CD4-positive, alpha-beta memory T cell (primary cell): ENCODE measurements at regions of chr14 and their contacts with region 1.

Region 1: DNA sequence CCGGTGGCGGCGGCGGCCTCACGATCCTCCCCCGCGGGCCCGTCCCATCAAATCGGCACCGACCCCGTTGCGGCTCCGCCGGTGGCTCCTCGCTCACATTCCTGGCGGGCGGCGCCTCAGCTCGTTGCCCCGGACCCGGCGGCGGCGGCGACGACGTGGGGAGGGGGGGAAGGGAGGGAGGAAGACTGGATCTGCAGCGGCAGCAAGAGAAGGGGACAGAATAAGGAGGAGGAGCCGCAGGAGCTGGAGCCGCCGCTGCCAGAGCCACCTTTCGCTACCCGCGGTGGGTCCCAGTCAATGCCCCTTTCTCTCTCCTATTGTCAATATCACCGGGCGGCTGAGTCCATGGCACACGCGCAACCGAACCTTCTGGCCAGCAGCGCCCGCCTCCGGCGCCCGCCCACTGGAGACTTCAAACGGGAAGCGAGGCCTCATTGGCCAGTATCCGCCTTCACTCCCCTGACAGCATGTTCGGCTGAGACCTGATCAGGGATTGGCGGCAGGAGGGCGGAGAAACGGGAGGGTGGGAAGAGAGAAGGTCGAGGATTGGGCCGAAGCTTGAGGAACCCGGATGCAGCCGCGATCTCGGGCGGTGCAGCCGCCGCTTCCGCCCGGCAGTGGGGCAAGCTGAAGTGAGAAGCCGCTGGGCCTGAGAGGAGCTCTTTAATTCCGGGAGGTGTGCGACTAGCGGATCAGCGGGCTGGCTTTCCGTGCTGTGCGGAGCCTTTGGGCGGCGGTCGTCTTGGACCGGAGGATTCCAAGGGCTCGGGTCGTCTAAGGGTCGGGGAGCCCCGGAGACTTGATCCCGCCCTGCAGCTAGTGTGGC is at the start of gene PPP2R5E:
- DNase-seq: peak; percentile 97 to 99 (median 98)
- H3K4me3 ChIP-seq: peak within 1 kb of the TSS; percentile 68 to 83
- H3K4me3 Mint-ChIP-seq: peak within 1 kb of the TSS; percentile 97 to 99 (median 98)
- H3K27ac ChIP-seq: peak within 1 kb of the TSS; percentile 91
- H3K27ac Mint-ChIP-seq: peak within 1 kb of the TSS; percentile 92 to 98 (median 97)
- H3K4me1 ChIP-seq: peaks cover 26% of the 10 kb centered on the region
- H3K4me1 Mint-ChIP-seq: peaks cover 26 to 48% (median 33%) of the 10 kb centered on the region in 4 donors
- H3K27me3 ChIP-seq: no peaks in the 10 kb centered on the region
- H3K27me3 Mint-ChIP-seq: peaks cover 0 to 1% of the 10 kb centered on the region in 2 donors
- total RNA-seq, gene PPP2R5E: 36.2 to 38.0 TPM

Region 2: DNA sequence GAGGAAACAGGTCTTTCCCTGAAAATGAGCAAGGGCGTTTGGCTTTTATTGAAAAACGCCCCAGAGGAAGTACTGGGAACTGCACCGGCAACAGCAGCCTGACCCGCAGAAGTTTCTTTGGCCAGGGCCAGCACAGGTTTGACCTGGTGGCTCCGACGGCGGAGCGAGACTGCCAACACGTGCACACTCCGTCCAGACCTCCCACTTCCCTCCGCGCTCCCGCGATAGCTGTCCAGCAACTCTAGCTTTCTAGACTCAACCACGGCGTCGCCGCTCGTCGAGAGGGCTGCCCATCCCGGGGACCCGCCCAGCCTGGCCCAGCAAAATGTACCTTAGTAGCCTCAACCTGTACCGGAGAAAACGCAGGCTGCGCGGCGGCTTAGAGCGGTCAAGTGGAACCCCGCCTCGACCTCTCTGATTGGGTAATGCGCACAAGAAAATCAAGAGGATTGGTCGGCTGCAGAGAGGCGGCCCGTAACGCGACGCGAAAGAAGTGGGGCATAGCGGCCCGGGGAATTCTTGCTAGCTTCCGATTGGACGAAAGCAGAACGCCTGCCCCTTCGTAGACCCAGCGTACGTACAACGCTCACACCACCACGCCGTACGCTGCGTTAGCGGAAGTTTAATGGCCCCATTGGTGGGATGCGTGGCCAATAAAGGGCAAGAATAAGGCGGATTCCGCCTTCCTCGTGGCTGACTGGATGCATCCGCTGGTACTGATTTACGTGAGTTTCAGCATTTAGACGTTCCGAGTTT is 98.4 kb after region 1 on chr14 and contains the start of gene WDR89:
- CTCF ChIA-PET with region 1: no interaction called
- POLR2A ChIA-PET with region 1: interaction called, 34 read pairs
- intact Hi-C with region 1: loop called (anchors 1 kb)
- DNase-seq: peak; percentile 96 to 99 (median 98)
- H3K4me3 ChIP-seq: peak within 1 kb of the TSS; percentile 85 to 96
- H3K4me3 Mint-ChIP-seq: peak within 1 kb of the TSS; percentile 85 to 98 (median 92)
- H3K27ac ChIP-seq: peak within 1 kb of the TSS; percentile 99
- H3K27ac Mint-ChIP-seq: peak within 1 kb of the TSS; percentile 90 to 99 (median 97)
- H3K4me1 ChIP-seq: peaks cover 37% of the 10 kb centered on the region
- H3K4me1 Mint-ChIP-seq: peaks cover 22 to 49% (median 33%) of the 10 kb centered on the region in 4 donors
- H3K27me3 ChIP-seq: no peaks in the 10 kb centered on the region
- H3K27me3 Mint-ChIP-seq: no peaks in the 10 kb centered on the region
- total RNA-seq, gene WDR89: 32.8 to 36.3 TPM

Region 3: DNA sequence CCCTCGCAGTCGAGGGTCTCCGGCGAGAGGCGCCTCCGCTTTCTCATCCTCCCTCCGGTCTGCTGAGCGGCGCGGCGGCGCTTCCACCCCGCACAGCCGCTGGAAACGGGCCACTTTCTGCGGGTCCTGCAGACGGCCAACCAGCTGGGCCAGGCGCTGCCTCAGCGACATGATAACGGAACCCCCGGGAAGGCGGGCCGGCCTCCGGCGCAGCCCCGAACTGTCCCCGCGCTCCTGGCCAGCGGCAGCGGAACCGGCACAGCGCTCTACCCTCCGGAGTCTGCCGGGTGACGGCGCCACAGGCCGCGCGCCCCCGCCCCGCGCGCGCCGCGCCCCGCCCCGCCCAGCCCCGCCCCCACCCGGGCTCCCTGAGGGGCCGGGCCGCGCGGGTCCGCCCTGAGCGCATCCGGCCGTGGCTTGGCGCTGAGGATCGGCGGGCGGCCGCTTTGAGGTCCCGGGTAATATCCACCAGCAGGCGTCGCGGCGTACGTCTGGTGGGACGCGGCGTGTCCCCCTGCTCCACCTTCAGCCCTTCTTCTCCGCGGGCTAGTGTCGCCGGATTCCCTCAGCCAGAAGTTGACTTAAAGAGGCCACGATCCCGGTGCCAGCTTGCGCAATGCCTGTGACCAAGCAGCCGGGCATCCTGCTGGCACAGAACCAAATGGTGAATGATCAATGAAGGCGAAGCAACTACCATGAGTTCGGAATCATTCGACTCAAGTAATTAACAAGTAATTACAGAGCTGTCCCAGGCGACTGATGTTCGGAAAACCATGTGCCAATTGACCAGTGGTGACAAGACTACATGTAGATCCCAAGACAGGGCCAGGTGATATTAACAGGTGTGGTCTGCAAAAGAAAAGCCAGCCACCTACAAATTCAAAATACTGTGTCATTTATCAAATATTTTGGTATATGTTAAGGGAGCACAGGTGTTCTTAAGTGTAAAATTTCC is 184.8 kb after region 1 on chr14 and contains the start of gene SGPP1:
- CTCF ChIA-PET with region 1: interaction called, 3 read pairs
- POLR2A ChIA-PET with region 1: interaction called, 11 read pairs
- intact Hi-C with region 1: loop called (anchors 1 kb)
- DNase-seq: peak; percentile 81 to 86 (median 83)
- H3K4me3 ChIP-seq: peak within 1 kb of the TSS; percentile 57 to 80
- H3K4me3 Mint-ChIP-seq: peak within 1 kb of the TSS; percentile 98 to 100 (median 99)
- H3K27ac ChIP-seq: peak within 1 kb of the TSS; percentile 68
- H3K27ac Mint-ChIP-seq: peak within 1 kb of the TSS; percentile 86 to 98 (median 97)
- H3K4me1 ChIP-seq: peaks cover 31% of the 10 kb centered on the region
- H3K4me1 Mint-ChIP-seq: peaks cover 25 to 53% (median 43%) of the 10 kb centered on the region in 4 donors
- H3K27me3 ChIP-seq: no peaks in the 10 kb centered on the region
- H3K27me3 Mint-ChIP-seq: no peaks in the 10 kb centered on the region
- total RNA-seq, gene SGPP1: 12.2 to 12.4 TPM

Region 4: DNA sequence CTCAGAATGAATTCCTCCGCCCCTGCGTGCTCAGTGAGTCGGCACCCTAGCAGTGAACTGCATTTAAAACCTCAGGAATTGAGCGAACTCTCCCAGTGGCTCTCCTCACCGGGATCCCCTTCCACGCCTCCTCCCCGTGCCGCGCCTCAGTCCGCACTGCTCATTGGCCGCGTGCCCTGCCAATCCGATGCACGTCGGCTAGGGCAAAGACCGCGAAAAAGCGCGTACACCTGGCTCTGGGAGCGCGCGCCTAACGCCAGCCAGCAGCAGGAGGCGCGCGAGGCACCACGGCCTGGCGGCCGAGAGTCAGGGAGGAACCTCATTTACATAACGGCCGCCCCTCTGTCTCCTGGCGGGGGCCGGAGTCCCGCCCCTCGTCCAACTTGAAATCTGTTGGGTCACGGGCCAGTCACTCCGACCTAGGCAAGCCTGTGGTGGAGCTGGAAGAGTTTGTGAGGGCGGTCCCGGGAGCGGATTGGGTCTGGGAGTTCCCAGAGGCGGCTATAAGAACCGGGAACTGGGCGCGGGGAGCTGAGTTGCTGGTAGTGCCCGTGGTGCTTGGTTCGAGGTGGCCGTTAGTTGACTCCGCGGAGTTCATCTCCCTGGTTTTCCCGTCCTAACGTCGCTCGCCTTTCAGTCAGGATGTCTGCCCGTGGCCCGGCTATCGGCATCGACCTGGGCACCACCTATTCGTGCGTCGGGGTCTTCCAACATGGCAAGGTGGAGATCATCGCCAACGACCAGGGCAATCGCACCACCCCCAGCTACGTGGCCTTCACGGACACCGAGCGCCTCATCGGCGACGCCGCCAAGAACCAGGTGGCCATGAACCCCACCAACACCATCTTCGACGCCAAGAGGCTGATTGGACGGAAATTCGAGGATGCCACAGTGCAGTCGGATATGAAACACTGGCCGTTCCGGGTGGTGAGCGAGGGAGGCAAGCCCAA is 997.3 kb after region 1 on chr14 and contains the start of gene HSPA2:
- CTCF ChIA-PET with region 1: no interaction called
- POLR2A ChIA-PET with region 1: no interaction called
- intact Hi-C with region 1: loop called (anchors 2 kb)
- DNase-seq: peak; percentile 92 to 94 (median 94)
- H3K4me3 ChIP-seq: peak within 1 kb of the TSS; percentile 65 to 86
- H3K4me3 Mint-ChIP-seq: peak within 1 kb of the TSS; percentile 92 to 99 (median 96)
- H3K27ac ChIP-seq: peak within 1 kb of the TSS; percentile 43
- H3K27ac Mint-ChIP-seq: peak within 1 kb of the TSS; percentile 86 to 98 (median 90)
- H3K4me1 ChIP-seq: peaks cover 24% of the 10 kb centered on the region
- H3K4me1 Mint-ChIP-seq: peaks cover 12 to 39% (median 29%) of the 10 kb centered on the region in 4 donors
- H3K27me3 ChIP-seq: no peaks in the 10 kb centered on the region
- H3K27me3 Mint-ChIP-seq: peaks cover 0 to 3% of the 10 kb centered on the region in 2 donors
- total RNA-seq, gene HSPA2: 1.3 to 1.5 TPM

Region 5: DNA sequence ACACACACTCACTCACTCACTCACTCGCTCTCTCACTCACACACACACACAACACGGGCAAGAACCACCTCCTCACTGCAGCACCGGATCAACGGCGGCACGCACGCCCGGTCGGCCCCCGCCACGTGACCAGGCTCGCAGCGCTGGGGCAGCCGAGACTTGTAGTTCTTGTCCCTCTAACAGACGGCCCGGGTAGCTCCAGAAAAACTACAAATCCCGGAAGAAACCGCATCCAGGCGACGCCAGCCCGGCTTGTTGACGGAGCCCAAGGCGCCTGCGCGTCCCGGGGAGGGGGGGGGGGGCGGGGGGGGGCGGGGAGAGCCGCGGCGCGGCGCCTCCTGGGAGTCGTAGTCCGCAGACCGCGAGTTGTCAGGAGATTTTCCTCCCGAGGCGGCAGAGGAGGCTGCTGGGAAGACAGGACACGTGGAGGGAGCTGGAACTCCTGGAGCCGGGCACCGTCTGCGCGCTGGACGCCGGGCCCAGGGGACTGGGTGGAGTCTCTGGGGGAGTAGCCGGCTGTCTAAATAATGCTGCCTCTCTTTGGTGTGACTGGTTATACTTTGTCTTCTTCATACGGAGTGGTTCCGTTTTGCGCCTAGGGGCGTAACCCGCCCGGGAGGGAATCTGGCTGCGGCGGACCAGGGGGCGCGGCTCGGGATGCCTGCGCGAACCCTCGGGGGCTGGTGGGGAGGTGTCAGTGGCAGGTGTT is 1559.4 kb after region 1 on chr14 and contains the start of gene MAX:
- CTCF ChIA-PET with region 1: no interaction called
- POLR2A ChIA-PET with region 1: no interaction called
- intact Hi-C with region 1: loop called (anchors 5 kb)
- DNase-seq: peak; percentile 98 to 100 (median 100)
- H3K4me3 ChIP-seq: peak within 1 kb of the TSS; percentile 77 to 100
- H3K4me3 Mint-ChIP-seq: peak within 1 kb of the TSS; percentile 91 to 100 (median 96)
- H3K27ac ChIP-seq: peak within 1 kb of the TSS; percentile 96
- H3K27ac Mint-ChIP-seq: peak within 1 kb of the TSS; percentile 92 to 99 (median 97)
- H3K4me1 ChIP-seq: peaks cover 41% of the 10 kb centered on the region
- H3K4me1 Mint-ChIP-seq: peaks cover 24 to 49% (median 35%) of the 10 kb centered on the region in 4 donors
- H3K27me3 ChIP-seq: no peaks in the 10 kb centered on the region
- H3K27me3 Mint-ChIP-seq: peaks cover 2 to 3% of the 10 kb centered on the region in 2 donors
- total RNA-seq, gene MAX: 188 to 212 TPM